ENCODE measurements at regions of chr1 and their contacts with region 1.

Region 1: DNA sequence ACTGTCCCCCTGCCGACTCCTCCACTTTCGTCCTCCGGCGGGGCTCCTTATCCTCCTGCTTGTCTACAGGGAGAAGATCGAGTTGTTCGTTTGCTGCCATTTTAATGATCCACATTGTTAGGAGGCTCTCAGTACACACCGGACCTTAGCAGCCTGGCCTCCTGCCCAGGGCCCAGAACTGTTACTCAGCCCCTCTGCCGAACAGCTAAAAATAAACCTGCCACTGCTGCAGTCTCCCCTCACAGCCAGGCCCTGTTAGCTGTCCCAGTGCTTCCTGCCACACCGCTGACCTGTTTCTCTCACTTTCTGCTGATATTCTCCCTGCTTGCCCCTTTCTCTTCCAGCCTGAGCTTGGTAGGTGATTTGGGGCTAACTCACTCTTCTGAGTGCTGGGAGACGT is 8.3 kb downstream of the MAPKAPK2 start:
- DNase-seq: no peak
- H3K4me3 ChIP-seq: no peak overlapping the region
- H3K27ac ChIP-seq: no peak overlapping the region
- H3K4me1 ChIP-seq: peaks cover 8 to 27% (median 23%) of the 10 kb centered on the region in 4 experiments
- H3K27me3 ChIP-seq: no peaks in the 10 kb centered on the region; a peak in 2 of 7 replicates
- CTCF ChIP-seq: no peak
- EP300 ChIP-seq: no peak
- POLR2A ChIP-seq: no peak
- RAD21 ChIP-seq: no peak

Region 2: DNA sequence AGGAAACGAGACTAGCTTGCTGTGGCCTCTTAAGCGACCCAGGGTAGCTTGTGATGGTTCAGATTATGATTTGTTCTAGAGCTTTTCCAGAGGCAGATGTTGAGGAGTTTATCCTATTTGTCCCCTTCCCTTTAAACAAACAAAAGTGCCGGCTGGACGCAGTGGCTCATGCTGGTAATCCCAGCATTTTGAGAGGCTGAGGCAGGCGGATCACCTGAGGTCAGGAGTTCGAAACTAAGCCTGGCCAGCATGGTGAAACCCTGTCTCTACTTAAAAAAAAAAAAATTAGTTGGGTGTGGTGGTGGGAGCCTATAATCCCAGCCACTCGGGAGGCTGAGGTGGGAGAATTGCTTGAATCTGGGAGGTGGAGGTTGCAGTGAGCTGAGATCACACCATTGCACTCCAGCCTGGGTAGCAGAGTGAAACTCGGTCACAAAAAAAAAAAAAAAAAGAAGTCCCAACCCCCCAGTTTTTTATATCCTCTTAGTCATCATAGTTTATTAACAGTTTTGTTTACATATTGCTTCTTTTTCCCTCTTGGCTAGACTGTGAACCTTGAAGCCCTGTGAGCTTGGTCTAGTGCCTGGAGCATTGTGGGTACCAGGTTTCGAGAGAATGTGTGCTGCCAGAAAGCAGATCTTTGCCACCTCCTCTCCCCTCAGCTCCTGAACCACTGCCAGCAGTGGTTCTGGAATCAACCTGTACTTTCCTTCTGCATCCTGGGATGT is 21.5 kb after region 1 on chr1:
- CTCF ChIA-PET with region 1: interaction called, 19 read pairs
- POLR2A ChIA-PET with region 1: interaction called, 5 read pairs
- DNase-seq: no peak
- H3K4me3 ChIP-seq: no peak overlapping the region
- H3K27ac ChIP-seq: no peak overlapping the region
- H3K4me1 ChIP-seq: no peaks in the 10 kb centered on the region
- H3K27me3 ChIP-seq: no peaks in the 10 kb centered on the region
- CTCF ChIP-seq: no peak
- EP300 ChIP-seq: no peak
- POLR2A ChIP-seq: no peak
- RAD21 ChIP-seq: no peak

Measured in H1 (cell line).